ENCODE measurements at regions of chr5 and their contacts with region 1.

Region 1: DNA sequence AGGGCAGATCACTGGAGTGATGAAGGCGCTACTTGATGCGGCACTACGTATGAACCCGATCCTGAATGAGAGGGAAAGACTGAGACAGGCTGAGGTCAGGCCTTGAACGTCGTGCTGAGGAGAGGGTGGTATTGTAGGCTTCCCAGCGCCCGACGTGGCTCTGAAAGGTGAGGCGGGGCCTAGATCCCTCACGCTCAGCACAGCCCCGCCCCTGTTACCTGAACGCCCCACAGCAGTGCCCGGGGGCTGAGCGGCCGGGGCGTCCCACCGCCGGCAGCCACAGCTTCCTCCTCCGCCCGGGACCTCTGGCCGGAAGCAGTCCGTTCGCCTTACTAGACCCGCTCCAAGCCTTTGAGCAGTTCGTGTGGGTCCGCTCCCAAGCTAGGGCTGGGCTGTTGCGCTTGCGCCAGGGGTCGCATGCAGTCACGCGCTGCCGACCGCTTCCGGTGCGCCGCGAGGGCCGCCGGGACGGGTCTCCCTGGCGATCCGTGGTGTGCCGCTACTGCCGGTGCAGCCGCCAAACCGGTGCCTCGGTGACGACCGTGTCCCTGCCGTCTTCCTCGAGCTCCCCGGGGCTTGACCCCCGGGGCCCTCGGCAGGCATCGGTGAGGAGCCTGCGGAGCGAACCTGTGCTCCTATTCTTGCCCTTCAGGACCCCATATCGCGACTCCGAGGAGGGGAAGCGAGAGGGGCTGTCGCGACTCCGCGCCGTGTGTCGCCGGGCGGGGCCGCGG is at the starts of genes HMGXB3 and TIGD6:
- DNase-seq: peak; percentile 67 to 89 (median 77)
- ATAC-seq: peak; percentile 81 to 84
- H3K4me3 Mint-ChIP-seq: peak within 1 kb of the TSS; percentile 75 to 98 (median 93)
- H3K27ac Mint-ChIP-seq: peak within 1 kb of the TSS; percentile 89 to 98 (median 95)
- H3K4me1 Mint-ChIP-seq: peaks cover 28 to 42% (median 40%) of the 10 kb centered on the region in 4 donors
- H3K27me3 Mint-ChIP-seq: no peaks in the 10 kb centered on the region
- polyA plus RNA-seq, gene HMGXB3: 4.6 to 13.1 (median 6.1) TPM
- polyA plus RNA-seq, gene TIGD6: 2.7 to 4.5 (median 3.6) TPM

Region 2: GRCh38 chr5:149895416-149896345 is 104.7 kb before region 1 on chr5:
- POLR2A ChIA-PET with region 1: no interaction called
- DNase-seq: no peak
- ATAC-seq: no peak
- H3K4me3 Mint-ChIP-seq: no peak overlapping the region
- H3K27ac Mint-ChIP-seq: no peak overlapping the region
- H3K4me1 Mint-ChIP-seq: peaks cover 0 to 2% (median under 1%) of the 10 kb centered on the region in 4 donors
- H3K27me3 Mint-ChIP-seq: peaks cover 0 to 8% (median 4%) of the 10 kb centered on the region in 5 donors

Region 3: DNA sequence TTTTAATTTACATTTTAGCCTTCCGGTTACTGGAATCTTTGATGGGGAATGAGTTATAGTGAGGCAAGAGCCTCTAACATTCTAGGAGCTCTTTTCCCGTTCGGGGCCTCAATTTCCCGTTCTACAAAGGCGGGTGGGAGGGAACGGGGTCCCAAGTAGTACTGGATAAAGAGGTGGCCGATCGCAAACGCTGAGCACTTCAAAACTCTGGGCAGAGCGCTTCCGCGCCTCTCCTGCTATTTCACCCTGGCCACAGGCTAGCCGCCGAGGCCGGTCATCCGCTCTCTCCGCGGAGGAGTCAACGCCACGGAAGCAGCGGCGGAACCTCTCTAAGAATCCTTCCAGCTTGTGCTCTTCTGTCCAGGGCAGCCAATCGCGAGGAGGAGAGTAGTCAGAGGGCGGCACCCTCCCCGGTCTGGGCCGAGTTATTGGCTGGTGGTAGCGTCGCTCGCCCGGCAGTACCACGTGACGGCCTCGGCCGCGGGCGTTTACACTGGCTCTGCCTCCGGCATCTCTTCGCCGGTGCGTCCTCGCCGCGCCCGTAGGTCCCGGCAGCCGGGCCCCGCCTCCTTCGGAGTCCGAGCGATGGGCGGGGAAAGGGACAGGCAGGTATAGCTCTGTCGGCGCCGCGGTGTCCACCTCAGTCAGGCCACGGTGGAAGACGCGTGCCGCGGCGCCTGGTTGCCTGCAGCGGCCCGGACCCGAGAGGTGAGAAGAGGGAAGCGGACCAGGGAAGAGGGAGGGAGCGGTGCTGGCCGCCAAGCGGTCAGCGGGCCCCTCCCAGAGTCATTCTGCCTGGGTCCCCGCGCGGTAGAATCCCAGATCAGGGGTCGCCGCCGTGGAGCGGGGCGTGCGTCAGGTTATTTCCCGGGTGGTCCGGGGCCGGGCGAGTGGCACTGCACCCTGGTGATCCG is 39.9 kb before region 1 on chr5 and contains the start of gene SLC26A2:
- POLR2A ChIA-PET with region 1: interaction called, 11 read pairs
- DNase-seq: peak; percentile 85 to 96 (median 90)
- ATAC-seq: peak; percentile 97 to 99
- H3K4me3 Mint-ChIP-seq: peak within 1 kb of the TSS; percentile 92 to 99 (median 98)
- H3K27ac Mint-ChIP-seq: peak within 1 kb of the TSS; percentile 96 to 99 (median 98)
- H3K4me1 Mint-ChIP-seq: peaks cover 24 to 42% (median 38%) of the 10 kb centered on the region in 4 donors
- H3K27me3 Mint-ChIP-seq: no peaks in the 10 kb centered on the region
- polyA plus RNA-seq, gene SLC26A2: 2.5 to 3.0 (median 2.6) TPM